Panc1 (cell line): ENCODE measurements at regions of chr11 and their contacts with region 1.

Region 1: GRCh38 chr11:69048718-69049489 is at the start of gene TPCN2:
- DNase-seq: peak; percentile 89
- ATAC-seq: peak; percentile 95
- H3K4me3 ChIP-seq: peak within 1 kb of the TSS; percentile 72 to 86
- H3K27ac ChIP-seq: peak within 1 kb of the TSS; percentile 87
- H3K4me1 ChIP-seq: peaks cover 37% of the 10 kb centered on the region
- H3K27me3 ChIP-seq: no peaks in the 10 kb centered on the region
- CTCF ChIP-seq: no peak
- total RNA-seq, gene TPCN2: 20.6 TPM

Region 2: GRCh38 chr11:68328374-68329091 is 720.4 kb before region 1 on chr11:
- CTCF ChIA-PET with region 1: no interaction called
- POLR2A ChIA-PET with region 1: no interaction called
- in situ Hi-C with region 1: no loop called
- intact Hi-C with region 1: no loop called
- DNase-seq: no peak
- ATAC-seq: peak; percentile 71
- H3K4me3 ChIP-seq: peak overlapping the region in 1 of 2 experiments; percentile 24; a peak in 2 of 4 replicates
- H3K27ac ChIP-seq: peak overlapping the region; percentile 95
- H3K4me1 ChIP-seq: peaks cover 86% of the 10 kb centered on the region
- H3K27me3 ChIP-seq: no peaks in the 10 kb centered on the region
- CTCF ChIP-seq: no peak

Region 3: DNA sequence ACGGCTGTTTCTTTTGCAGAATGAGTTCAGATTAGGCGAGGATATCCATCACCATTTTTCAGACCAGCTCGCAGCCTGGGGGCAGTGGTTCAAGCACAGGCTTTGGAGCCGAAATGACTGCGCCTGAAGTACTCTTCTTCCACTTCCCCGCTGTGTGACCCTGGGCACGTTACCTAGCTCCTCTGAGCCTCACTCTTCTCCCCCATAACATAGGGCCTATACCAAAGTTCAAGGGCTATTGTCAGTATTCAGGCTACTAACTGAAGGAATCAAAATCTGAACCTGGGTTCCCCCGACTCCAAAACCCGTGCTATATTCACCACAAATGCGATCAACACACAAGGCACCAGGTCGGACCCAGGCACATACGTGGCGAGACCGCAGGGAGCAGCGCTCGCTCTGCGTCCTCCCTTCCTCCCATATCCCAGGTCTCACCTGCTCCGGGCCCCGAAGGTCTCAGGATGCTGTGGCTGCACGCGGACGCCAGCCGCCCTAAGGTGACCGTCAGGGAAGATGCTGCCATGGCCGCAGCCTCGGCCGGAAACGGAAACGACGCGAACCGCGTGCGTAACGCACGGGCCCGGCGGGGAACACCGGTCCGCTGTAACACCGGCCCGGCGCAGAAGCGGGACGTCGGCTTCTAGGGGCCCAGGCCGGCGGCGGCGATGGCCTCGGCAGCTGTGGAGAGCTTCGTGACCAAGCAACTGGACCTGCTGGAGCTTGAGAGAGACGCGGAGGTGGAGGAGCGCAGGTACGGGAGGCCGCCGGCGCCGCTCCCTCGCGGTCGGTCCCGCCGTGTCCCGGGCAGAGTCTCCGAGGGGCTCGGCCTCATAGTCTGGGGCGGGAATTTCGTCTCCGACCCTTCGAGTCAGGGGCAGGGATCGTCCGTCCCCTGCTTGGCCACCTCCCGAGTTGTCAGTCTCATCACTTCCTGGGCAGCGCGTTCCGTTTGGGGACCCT is 145.3 kb before region 1 on chr11 and contains the starts of genes IGHMBP2 and MRPL21:
- CTCF ChIA-PET with region 1: interaction called, 3 read pairs
- POLR2A ChIA-PET with region 1: no interaction called
- in situ Hi-C with region 1: no loop called
- intact Hi-C with region 1: loop called (anchors 5 kb)
- DNase-seq: peak; percentile 12
- ATAC-seq: peak; percentile 97
- H3K4me3 ChIP-seq: peak within 1 kb of the TSS; percentile 93 to 100
- H3K27ac ChIP-seq: peak within 1 kb of the TSS; percentile 95
- H3K4me1 ChIP-seq: 0 out of 2 replicates have a peak, but pooled peaks cover 7% of the 10 kb centered on the region
- H3K27me3 ChIP-seq: no peaks in the 10 kb centered on the region
- CTCF ChIP-seq: no peak
- total RNA-seq, gene IGHMBP2: 27.8 TPM
- total RNA-seq, gene MRPL21: 94.9 TPM

Region 4: GRCh38 chr11:69909561-69910496 is 860.9 kb after region 1 on chr11:
- CTCF ChIA-PET with region 1: no interaction called
- POLR2A ChIA-PET with region 1: interaction called, 10 read pairs
- in situ Hi-C with region 1: no loop called
- intact Hi-C with region 1: no loop called
- DNase-seq: no peak
- ATAC-seq: peak; percentile 38; the same call in 1 of the 2 replicates
- H3K4me3 ChIP-seq: no peak overlapping the region
- H3K27ac ChIP-seq: no peak overlapping the region
- H3K4me1 ChIP-seq: peaks cover 5% of the 10 kb centered on the region
- H3K27me3 ChIP-seq: no peaks in the 10 kb centered on the region
- CTCF ChIP-seq: peak; percentile 99